ENCODE measurements at regions of chr12 and their contacts with region 1.

Region 1: GRCh38 chr12:57175428-57176138 is 28.2 kb upstream of the LRP1-AS start:
- DNase-seq: no peak
- H3K4me3 ChIP-seq: peak overlapping the region in 1 of 2 donors; percentile 9
- H3K27ac ChIP-seq: peak overlapping the region; percentile 69
- H3K4me1 ChIP-seq: peaks cover 63% of the 10 kb centered on the region
- H3K27me3 ChIP-seq: no peaks in the 10 kb centered on the region
- CTCF ChIP-seq: peak; percentile 21 to 81 (median 57)
- POLR2A ChIP-seq: no peak

Region 2: DNA sequence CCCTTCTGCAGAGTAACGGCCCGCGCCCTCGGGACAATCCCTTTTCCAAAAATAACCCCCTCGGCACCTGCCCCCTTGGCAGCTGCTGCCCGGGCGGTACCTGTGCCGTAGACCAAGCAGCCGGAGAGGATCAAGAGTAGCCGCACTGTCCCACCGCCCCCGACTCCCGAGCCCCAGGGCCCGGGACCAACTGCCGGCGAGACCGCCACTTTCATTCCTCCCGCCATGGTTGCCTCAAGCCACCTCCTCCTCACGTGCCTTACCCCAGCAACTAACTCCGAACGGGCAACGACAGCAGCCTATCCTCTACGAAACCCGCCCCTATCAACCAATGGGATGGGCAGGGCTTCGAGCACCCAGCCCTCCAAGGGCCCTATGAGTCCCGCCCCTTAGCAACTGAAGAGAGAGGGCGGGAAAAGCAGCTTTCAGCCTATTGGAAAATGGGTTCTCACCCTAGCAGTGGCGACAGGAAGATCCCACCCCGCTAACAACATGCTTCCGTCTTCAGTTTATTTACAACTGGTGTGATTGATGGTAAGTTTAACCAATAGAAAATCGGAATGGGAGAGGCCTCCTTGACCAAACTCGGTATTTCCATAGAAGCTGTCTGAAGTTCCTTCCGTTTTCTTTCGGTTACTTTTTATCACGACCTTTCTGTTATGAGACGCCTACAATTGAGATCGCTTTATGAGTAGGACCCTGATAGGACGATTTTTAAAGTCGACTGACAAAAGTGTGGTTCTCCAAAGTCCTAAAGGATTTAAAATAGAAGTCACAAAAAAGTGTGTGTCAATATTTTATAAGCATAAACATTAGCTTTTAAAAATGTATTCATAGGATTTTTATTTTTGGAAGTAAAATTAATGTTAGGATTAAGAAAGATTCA is 96.8 kb before region 1 on chr12 and contains the start of gene NEMP1:
- intact Hi-C with region 1: loop called (anchors 10 kb)
- DNase-seq: peak; percentile 99 to 100
- H3K4me3 ChIP-seq: peak within 1 kb of the TSS; percentile 62 to 69
- H3K27ac ChIP-seq: peak within 1 kb of the TSS; percentile 89
- H3K4me1 ChIP-seq: peaks cover 19% of the 10 kb centered on the region
- H3K27me3 ChIP-seq: no peaks in the 10 kb centered on the region
- CTCF ChIP-seq: no peak
- POLR2A ChIP-seq: peak in 1 of 2 donors; percentile 41
- total RNA-seq, gene NEMP1: 7.1 TPM

Region 3: DNA sequence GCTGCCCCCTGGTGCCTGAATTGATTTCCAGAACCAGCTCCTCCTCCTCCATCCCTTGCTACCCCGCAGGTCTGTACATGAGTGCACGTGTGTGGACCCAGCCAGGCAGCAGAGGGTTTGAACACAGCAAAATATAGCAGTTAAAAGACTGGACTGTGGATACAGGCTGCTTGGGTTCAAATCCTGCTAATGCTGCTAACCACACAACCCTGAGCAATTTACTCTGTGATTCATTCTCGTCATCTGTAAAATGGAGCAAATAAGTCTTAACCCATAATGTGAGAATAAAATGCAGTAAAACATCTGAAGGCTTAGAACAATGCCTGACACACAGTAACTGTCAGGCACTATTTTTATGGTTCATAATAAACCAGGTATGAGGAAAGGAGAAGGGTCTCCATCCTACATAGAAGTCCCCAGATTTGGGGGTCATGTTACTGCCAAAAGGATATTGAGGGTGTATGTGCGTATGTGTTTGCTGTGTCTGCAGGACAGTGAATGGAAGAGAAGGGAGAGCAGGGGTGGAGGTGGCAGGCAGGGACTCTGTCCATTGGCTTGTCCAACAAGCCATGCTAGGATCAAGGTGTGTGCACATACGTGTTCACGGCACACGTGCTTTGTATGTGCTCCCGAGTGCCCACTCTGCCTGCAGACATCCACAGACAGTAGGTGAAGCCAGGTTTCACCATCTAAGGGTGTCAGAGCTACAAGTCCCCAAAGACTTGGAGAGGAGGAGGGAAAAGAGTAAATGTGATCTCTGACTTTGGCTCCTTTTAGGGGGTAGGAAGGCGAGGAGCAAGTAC is 62.9 kb before region 1 on chr12:
- intact Hi-C with region 1: no loop called
- DNase-seq: peak in 1 of 2 donors; percentile 87
- H3K4me3 ChIP-seq: peak overlapping the region; percentile 61 to 90
- H3K27ac ChIP-seq: peak overlapping the region; percentile 100
- H3K4me1 ChIP-seq: peaks cover 33% of the 10 kb centered on the region
- H3K27me3 ChIP-seq: no peaks in the 10 kb centered on the region
- CTCF ChIP-seq: no peak
- POLR2A ChIP-seq: no peak

Region 4: GRCh38 chr12:57401165-57401564 is 225.6 kb after region 1 on chr12:
- intact Hi-C with region 1: no loop called
- DNase-seq: no peak
- H3K4me3 ChIP-seq: no peak overlapping the region
- H3K27ac ChIP-seq: no peak overlapping the region
- H3K4me1 ChIP-seq: no peaks in the 10 kb centered on the region
- H3K27me3 ChIP-seq: no peaks in the 10 kb centered on the region
- CTCF ChIP-seq: no peak
- POLR2A ChIP-seq: no peak

Measured in vagina (tissue), 2 donors.